CD8-positive, alpha-beta T cell (primary cell): ENCODE measurements at regions of chr19 and their contacts with region 1.

Region 1: DNA sequence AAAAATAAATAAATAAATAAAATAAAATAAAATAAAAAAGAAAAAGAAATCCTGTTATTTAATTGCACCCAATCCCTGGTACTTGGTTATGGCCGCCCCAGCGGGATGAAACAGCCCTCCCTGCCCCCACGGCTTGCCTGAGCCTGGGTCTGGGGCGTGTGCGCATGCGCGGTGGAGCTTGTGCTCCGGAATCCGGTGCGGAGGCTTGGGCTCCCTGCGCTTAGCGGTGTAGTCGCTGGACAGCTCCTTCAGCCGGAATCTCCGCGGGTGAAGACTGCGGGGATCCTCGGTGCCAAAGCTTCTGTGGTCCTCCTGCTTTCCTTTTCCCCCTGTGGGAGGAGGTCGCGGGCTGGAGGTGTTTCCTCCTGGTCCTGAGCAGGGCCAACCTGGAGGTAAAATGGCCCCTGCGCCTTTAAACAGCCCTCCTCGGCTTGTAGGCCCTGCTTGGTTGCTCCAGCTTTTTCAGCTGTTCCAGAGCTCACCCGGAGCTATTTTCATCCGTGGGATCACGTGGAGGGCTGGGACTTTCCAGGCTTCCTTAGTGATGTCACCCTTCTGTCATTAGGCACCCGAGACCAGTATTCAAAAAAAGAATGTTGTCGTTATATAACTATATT is at the start of gene PLA2G4C:
- DNase-seq: peak; percentile 57 to 91 (median 83)
- ATAC-seq: peak; percentile 82
- H3K4me3 ChIP-seq: peak within 1 kb of the TSS; percentile 69 to 70
- H3K4me3 Mint-ChIP-seq: peak within 1 kb of the TSS; percentile 77
- H3K27ac ChIP-seq: peak within 1 kb of the TSS; percentile 21 to 70
- H3K27ac Mint-ChIP-seq: peak within 1 kb of the TSS; percentile 52
- H3K4me1 ChIP-seq: peaks cover 5% of the 10 kb centered on the region
- H3K4me1 Mint-ChIP-seq: peaks cover 7% of the 10 kb centered on the region
- H3K27me3 ChIP-seq: no peaks in the 10 kb centered on the region
- H3K27me3 Mint-ChIP-seq: no peaks in the 10 kb centered on the region
- CTCF ChIP-seq: no peak
- total RNA-seq, gene PLA2G4C: 0.73 to 1.1 TPM

Region 2: GRCh38 chr19:47682939-47683338 is 427.5 kb before region 1 on chr19:
- CTCF ChIA-PET with region 1: no interaction called
- POLR2A ChIA-PET with region 1: no interaction called
- intact Hi-C with region 1: no loop called
- DNase-seq: no peak
- ATAC-seq: no peak
- H3K4me3 ChIP-seq: no peak overlapping the region
- H3K4me3 Mint-ChIP-seq: no peak overlapping the region
- H3K27ac ChIP-seq: no peak overlapping the region
- H3K27ac Mint-ChIP-seq: no peak overlapping the region
- H3K4me1 ChIP-seq: no peaks in the 10 kb centered on the region
- H3K4me1 Mint-ChIP-seq: no peaks in the 10 kb centered on the region
- H3K27me3 ChIP-seq: no peaks in the 10 kb centered on the region
- H3K27me3 Mint-ChIP-seq: no peaks in the 10 kb centered on the region
- CTCF ChIP-seq: no peak

Region 3: GRCh38 chr19:48120505-48120904 is 10.0 kb after region 1 on chr19:
- CTCF ChIA-PET with region 1: interaction called, 20 read pairs
- POLR2A ChIA-PET with region 1: no interaction called
- intact Hi-C with region 1: no loop called
- DNase-seq: no peak
- ATAC-seq: no peak
- H3K4me3 ChIP-seq: no peak overlapping the region
- H3K4me3 Mint-ChIP-seq: no peak overlapping the region
- H3K27ac ChIP-seq: no peak overlapping the region
- H3K27ac Mint-ChIP-seq: no peak overlapping the region
- H3K4me1 ChIP-seq: no peaks in the 10 kb centered on the region
- H3K4me1 Mint-ChIP-seq: peaks cover 5% of the 10 kb centered on the region
- H3K27me3 ChIP-seq: no peaks in the 10 kb centered on the region
- H3K27me3 Mint-ChIP-seq: no peaks in the 10 kb centered on the region
- CTCF ChIP-seq: no peak

Region 4: GRCh38 chr19:48152551-48152950 is 42.1 kb after region 1 on chr19:
- CTCF ChIA-PET with region 1: interaction called, 16 read pairs
- POLR2A ChIA-PET with region 1: interaction called, 6 read pairs
- intact Hi-C with region 1: loop called (anchors 1 to 5 kb)
- DNase-seq: peak; percentile 36 to 81 (median 61)
- ATAC-seq: peak; percentile 72
- H3K4me3 ChIP-seq: no peak overlapping the region
- H3K4me3 Mint-ChIP-seq: no peak overlapping the region
- H3K27ac ChIP-seq: no peak overlapping the region
- H3K27ac Mint-ChIP-seq: no peak overlapping the region
- H3K4me1 ChIP-seq: no peaks in the 10 kb centered on the region
- H3K4me1 Mint-ChIP-seq: no peaks in the 10 kb centered on the region
- H3K27me3 ChIP-seq: no peaks in the 10 kb centered on the region
- H3K27me3 Mint-ChIP-seq: no peaks in the 10 kb centered on the region
- CTCF ChIP-seq: peak; percentile 88